A673 (cell line): ENCODE measurements at regions of chr2 and their contacts with region 1.

Region 1: DNA sequence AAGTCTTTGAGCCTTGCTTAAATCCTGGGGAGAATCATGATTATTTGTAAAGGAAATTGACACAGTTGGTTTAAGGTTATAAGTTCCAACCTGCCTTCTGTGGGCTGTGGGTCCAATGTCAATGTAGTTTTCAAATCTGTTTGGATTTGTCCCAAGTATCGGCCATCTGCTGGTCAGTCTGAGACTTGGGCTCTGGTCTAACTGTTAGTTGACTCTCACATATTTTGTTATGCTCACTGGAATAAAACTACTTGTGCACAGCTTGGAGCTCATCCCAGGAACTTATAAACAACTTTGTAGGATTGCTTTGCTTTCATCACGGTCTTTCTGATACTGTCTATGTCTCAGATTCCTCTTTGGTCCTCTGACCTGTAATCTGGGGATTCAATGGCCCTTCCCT is 1026.2 kb upstream of the ZEB2 start:
- DNase-seq: peak; percentile 36
- H3K4me3 ChIP-seq: no peak overlapping the region
- H3K27ac ChIP-seq: peak overlapping the region; percentile 98
- H3K4me1 ChIP-seq: peaks cover 25% of the 10 kb centered on the region
- H3K27me3 ChIP-seq: no peaks in the 10 kb centered on the region
- CTCF ChIP-seq: peak; percentile 22; the same call in 1 of the 2 replicates

Region 2: GRCh38 chr2:144320491-144320890 is 1225.6 kb before region 1 on chr2:
- CTCF ChIA-PET with region 1: no interaction called
- POLR2A ChIA-PET with region 1: no interaction called
- intact Hi-C with region 1: loop called (anchors 2 kb)
- DNase-seq: peak; percentile 60
- H3K4me3 ChIP-seq: no peak overlapping the region
- H3K27ac ChIP-seq: peak overlapping the region; percentile 40
- H3K4me1 ChIP-seq: peaks cover 58% of the 10 kb centered on the region
- H3K27me3 ChIP-seq: no peaks in the 10 kb centered on the region
- CTCF ChIP-seq: no peak

Region 3: DNA sequence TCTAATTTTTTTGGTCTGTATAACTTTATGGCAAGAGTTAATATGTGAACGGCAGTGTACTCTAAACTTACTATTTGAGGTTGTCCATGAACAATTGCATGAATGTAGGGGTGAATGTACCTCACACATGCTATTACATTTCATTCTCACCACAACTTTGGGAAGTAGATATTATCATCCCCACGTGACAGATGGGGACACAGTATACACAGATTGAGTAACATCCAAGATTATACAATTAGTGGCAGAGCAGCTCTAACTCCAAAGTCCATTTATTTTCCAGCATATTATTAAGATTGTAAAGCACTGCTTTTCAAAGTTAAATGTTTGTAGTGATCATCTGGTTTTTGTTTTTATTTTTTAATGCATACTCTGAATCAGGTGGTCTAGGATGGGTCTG is 404.1 kb before region 1 on chr2:
- CTCF ChIA-PET with region 1: no interaction called
- POLR2A ChIA-PET with region 1: no interaction called
- intact Hi-C with region 1: no loop called
- DNase-seq: no peak
- H3K4me3 ChIP-seq: no peak overlapping the region
- H3K27ac ChIP-seq: no peak overlapping the region
- H3K4me1 ChIP-seq: no peaks in the 10 kb centered on the region
- H3K27me3 ChIP-seq: no peaks in the 10 kb centered on the region
- CTCF ChIP-seq: no peak

Region 4: GRCh38 chr2:145299368-145299767 is 246.7 kb before region 1 on chr2:
- CTCF ChIA-PET with region 1: no interaction called
- POLR2A ChIA-PET with region 1: no interaction called
- intact Hi-C with region 1: no loop called
- DNase-seq: no peak
- H3K4me3 ChIP-seq: no peak overlapping the region
- H3K27ac ChIP-seq: no peak overlapping the region
- H3K4me1 ChIP-seq: no peaks in the 10 kb centered on the region
- H3K27me3 ChIP-seq: no peaks in the 10 kb centered on the region
- CTCF ChIP-seq: no peak

Region 5: GRCh38 chr2:145558617-145559350 is 12.7 kb after region 1 on chr2:
- CTCF ChIA-PET with region 1: no interaction called
- POLR2A ChIA-PET with region 1: no interaction called
- intact Hi-C with region 1: no loop called
- DNase-seq: no peak
- H3K4me3 ChIP-seq: no peak overlapping the region
- H3K27ac ChIP-seq: no peak overlapping the region
- H3K4me1 ChIP-seq: peaks cover 5% of the 10 kb centered on the region
- H3K27me3 ChIP-seq: no peaks in the 10 kb centered on the region
- CTCF ChIP-seq: no peak

Region 6: DNA sequence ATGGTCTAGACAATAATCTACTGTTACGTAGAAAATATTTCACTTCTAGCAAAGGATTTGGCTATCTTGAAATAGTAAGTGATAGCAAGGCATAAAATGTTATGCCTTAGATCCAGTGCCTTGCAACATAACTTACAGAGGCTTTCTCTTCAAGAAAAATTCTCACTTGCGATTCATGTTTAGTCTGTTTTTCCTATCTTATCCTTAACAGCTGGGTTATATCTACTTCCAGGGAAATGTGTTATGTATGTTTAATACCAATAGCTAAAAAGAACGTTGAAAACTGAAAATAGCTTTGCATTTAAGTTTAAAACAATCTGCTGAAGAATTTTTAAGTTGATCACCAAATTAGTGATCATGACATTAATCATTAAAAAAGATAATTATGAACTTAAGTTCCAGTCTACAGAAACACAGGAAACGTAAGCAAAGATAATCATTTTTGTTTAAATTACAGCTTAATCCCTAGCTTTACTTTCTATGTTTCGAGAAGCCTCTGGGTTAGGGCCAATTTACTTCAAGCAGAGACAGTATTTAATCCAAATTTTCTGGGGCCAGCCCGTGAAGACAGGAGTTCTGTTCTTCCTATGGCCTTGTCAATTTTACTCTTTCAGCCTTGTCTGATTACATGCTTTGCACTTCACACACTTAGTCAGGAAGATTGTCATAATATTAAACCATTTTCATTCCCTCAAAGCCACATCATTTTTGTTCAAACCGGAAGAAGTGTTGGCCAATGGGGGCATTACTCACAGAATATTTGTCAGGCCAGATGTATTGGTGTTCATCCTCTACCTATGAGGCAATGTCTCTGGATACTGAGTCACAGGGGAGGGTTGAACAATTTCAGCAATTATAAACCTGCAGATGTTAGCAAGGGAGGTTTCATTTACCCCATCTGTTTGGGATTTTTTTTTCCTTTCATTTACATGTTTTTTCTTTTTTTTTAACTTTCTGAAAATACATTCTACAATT is 106.8 kb after region 1 on chr2:
- CTCF ChIA-PET with region 1: no interaction called
- POLR2A ChIA-PET with region 1: no interaction called
- intact Hi-C with region 1: loop called (anchors 2 kb)
- DNase-seq: peak; percentile 90
- H3K4me3 ChIP-seq: no peak overlapping the region
- H3K27ac ChIP-seq: peak overlapping the region; percentile 83
- H3K4me1 ChIP-seq: peaks cover 59% of the 10 kb centered on the region
- H3K27me3 ChIP-seq: no peaks in the 10 kb centered on the region
- CTCF ChIP-seq: no peak

Region 7: DNA sequence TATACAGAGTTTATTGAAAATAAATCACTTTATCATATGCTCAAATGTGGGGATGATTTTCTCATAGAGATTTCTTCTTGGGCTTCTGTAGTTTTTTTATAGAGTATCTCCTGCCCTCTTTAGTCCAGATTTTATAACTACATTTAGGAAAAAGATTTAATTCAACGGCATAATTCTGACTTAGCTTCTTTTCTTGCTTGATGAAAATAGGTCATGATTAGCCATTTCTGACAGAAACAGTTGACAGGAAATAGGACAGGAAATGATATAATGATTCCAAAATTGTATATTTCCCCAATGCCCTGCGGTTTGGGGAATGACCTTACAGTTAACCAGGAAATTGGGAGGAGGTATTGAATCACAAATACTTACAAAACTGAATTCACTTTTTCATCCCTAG is 766.8 kb after region 1 on chr2:
- CTCF ChIA-PET with region 1: no interaction called
- POLR2A ChIA-PET with region 1: no interaction called
- intact Hi-C with region 1: loop called (anchors 2 kb)
- DNase-seq: peak; percentile 97
- H3K4me3 ChIP-seq: no peak overlapping the region
- H3K27ac ChIP-seq: peak overlapping the region; percentile 66
- H3K4me1 ChIP-seq: peaks cover 52% of the 10 kb centered on the region
- H3K27me3 ChIP-seq: no peaks in the 10 kb centered on the region
- CTCF ChIP-seq: peak; percentile 59

Region 8: DNA sequence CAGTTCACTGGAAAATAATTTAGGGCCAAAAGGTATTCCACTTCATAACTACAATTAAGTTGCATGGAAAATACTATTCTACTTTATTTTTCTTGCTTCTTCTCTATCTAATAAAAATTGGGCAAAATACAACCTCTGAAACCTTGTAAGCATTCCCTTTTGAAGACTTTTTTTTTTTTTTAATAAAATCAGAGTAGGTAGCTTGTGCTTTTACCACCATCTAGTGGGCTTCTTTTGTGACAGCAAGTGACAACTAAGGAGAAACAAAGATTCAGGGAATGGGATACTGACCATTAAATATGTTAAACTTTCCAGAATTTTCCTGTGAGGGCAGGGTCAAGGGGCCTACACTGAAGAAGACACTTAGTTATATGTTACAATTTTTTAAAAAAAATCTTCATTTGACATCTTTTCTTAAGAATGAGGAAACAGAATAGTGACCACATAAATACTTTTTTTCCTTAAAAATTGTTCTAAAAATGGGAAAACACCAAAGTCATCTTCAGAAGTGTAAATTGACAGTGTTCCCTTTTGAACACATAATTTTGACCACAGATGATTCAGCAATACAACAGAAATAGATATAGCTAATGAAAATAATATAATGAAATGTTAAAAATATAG is 1115.5 kb after region 1 on chr2:
- CTCF ChIA-PET with region 1: no interaction called
- POLR2A ChIA-PET with region 1: no interaction called
- intact Hi-C with region 1: loop called (anchors 2 kb)
- DNase-seq: peak; percentile 72
- H3K4me3 ChIP-seq: no peak overlapping the region
- H3K27ac ChIP-seq: no peak overlapping the region
- H3K4me1 ChIP-seq: peaks cover 5% of the 10 kb centered on the region
- H3K27me3 ChIP-seq: no peaks in the 10 kb centered on the region
- CTCF ChIP-seq: peak; percentile 80